OCI-LY7 (cell line): ENCODE measurements at regions of chr1 and their contacts with region 1.

Region 1: GRCh38 chr1:182789138-182790076 is at the start of gene NPL:
- DNase-seq: peak; percentile 86
- H3K4me3 ChIP-seq: peak within 1 kb of the TSS; percentile 67
- H3K27ac ChIP-seq: no peak within 1 kb of the TSS
- H3K4me1 ChIP-seq: peaks cover 17% of the 10 kb centered on the region
- CTCF ChIP-seq: no peak
- total RNA-seq, gene NPL: 2.2 and 4.1 TPM in 2 replicates

Region 2: DNA sequence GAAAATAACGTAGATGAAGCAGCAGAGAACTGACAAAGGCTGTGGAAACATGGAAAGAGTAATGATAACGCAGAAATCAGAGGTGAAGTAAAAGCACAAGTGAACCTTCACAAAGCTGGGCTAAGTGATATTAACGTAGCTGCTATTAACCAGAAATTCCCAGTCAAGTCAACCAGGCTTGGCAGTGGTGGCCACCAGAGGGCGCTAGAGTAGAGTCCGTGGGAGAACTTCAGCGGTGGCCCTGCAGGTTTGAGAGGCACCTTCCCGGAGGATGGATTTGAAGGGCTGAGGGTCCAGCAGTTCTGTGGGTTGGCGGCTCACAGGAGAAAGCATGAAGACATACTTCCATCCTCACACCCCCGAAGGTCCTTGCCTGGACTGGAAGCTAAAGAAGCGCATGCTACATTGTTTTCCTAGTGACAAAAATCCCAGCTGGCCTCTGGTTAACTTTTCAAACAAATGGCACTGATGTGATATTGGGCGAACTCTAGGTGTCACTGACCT is 646.2 kb before region 1 on chr1:
- CTCF ChIA-PET with region 1: no interaction called
- POLR2A ChIA-PET with region 1: no interaction called
- intact Hi-C with region 1: loop called (anchors 10 kb)
- DNase-seq: peak; percentile 77
- H3K4me3 ChIP-seq: no peak overlapping the region
- H3K27ac ChIP-seq: no peak overlapping the region
- H3K4me1 ChIP-seq: no peaks in the 10 kb centered on the region
- CTCF ChIP-seq: peak; percentile 96

Region 3: DNA sequence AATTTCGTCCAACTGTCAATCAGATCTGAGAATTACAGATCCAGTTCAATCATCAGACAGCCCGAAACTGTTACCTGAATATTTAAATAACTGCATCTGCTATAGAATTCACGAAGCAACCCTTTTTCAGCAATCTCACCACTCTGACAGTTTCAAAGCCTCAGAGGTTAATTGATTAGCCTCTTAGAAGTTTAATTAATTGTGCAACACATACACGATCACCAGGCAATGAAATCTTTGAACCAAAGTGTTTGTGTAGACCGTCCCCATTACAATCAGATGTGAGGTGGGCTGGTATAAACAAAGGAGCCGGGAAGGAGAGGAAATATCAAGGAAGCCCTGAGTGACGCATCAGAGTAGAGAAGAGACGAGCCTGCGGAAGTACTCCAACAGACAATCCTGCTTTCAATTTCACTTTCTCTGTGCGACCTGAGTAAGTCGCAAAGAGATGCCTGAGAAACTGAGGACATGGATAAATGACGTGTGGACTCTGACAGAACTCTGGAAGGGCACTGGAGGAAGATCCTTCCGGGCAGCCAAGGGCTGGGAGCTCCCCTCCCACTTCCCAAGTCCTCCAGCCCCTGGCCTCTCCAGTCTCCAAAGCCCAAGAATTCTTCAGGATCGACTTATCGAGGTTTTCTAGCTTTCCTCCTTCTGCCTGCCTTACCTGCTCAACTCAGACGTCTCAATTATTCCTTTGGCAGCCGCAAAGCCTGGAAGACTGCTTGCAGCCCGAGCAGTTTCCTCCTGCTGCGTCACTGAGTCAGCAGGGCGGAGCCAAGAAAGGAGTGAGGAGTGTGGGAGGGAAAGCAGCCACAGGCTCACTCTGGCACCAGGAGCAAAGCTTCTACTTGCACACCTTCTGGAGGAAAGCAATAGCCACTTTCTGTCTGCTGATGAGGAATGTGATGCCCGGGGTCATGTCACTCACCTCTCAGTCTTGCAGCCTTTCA is 200.6 kb before region 1 on chr1 and contains the start of gene RNASEL:
- CTCF ChIA-PET with region 1: interaction called, 189 read pairs
- POLR2A ChIA-PET with region 1: interaction called, 26 read pairs
- intact Hi-C with region 1: no loop called
- DNase-seq: peak; percentile 57
- H3K4me3 ChIP-seq: peak within 1 kb of the TSS; percentile 71
- H3K27ac ChIP-seq: peak within 1 kb of the TSS; percentile 34
- H3K4me1 ChIP-seq: peaks cover 15% of the 10 kb centered on the region
- CTCF ChIP-seq: no peak
- total RNA-seq, gene RNASEL: 1.3 and 2.2 TPM in 2 replicates

Region 4: GRCh38 chr1:182829285-182829932 is 40.0 kb after region 1 on chr1:
- CTCF ChIA-PET with region 1: no interaction called
- POLR2A ChIA-PET with region 1: interaction called, 17 read pairs
- intact Hi-C with region 1: no loop called
- DNase-seq: peak; percentile 72
- H3K4me3 ChIP-seq: peak overlapping the region; percentile 56
- H3K27ac ChIP-seq: peak overlapping the region; percentile 53
- H3K4me1 ChIP-seq: peaks cover 23% of the 10 kb centered on the region
- CTCF ChIP-seq: no peak

Region 5: GRCh38 chr1:182839209-182840065 is 50.0 kb after region 1 on chr1 and contains the start of gene DHX9:
- CTCF ChIA-PET with region 1: no interaction called
- POLR2A ChIA-PET with region 1: interaction called, 3 read pairs
- intact Hi-C with region 1: loop called (anchors 2 kb)
- DNase-seq: peak; percentile 95
- H3K4me3 ChIP-seq: peak within 1 kb of the TSS; percentile 98
- H3K27ac ChIP-seq: peak within 1 kb of the TSS; percentile 87
- H3K4me1 ChIP-seq: peaks cover 35% of the 10 kb centered on the region
- CTCF ChIP-seq: peak; percentile 55
- total RNA-seq, gene DHX9: 217 and 276 TPM in 2 replicates